CD4-positive, alpha-beta T cell (primary cell): ENCODE measurements at regions of chr6 and their contacts with region 1.

Region 1: GRCh38 chr6:30877419-30878371 is 6.6 kb upstream of the DDR1 start:
- DNase-seq: peak; percentile 55 to 86 (median 71)
- ATAC-seq: peak; percentile 74
- H3K4me3 ChIP-seq: peak overlapping the region; percentile 48
- H3K4me3 Mint-ChIP-seq: peak overlapping the region; percentile 34
- H3K27ac ChIP-seq: no peak overlapping the region
- H3K27ac Mint-ChIP-seq: peak overlapping the region; percentile 1
- H3K4me1 ChIP-seq: peaks cover 13% of the 10 kb centered on the region
- H3K4me1 Mint-ChIP-seq: peaks cover 19% of the 10 kb centered on the region
- H3K27me3 ChIP-seq: no peaks in the 10 kb centered on the region
- H3K27me3 Mint-ChIP-seq: no peaks in the 10 kb centered on the region
- CTCF ChIP-seq: peak; percentile 91

Region 2: GRCh38 chr6:30742316-30743098 is 135.2 kb before region 1 on chr6 and contains the start of gene FLOT1:
- CTCF ChIA-PET with region 1: interaction called, 3 read pairs
- POLR2A ChIA-PET with region 1: no interaction called
- intact Hi-C with region 1: loop called (anchors 1 to 2 kb)
- DNase-seq: peak; percentile 52 to 93 (median 76)
- ATAC-seq: peak; percentile 53
- H3K4me3 ChIP-seq: peak within 1 kb of the TSS; percentile 85
- H3K4me3 Mint-ChIP-seq: peak within 1 kb of the TSS; percentile 97
- H3K27ac ChIP-seq: peak within 1 kb of the TSS; percentile 31 to 76
- H3K27ac Mint-ChIP-seq: peak within 1 kb of the TSS; percentile 91
- H3K4me1 ChIP-seq: peaks cover 66% of the 10 kb centered on the region
- H3K4me1 Mint-ChIP-seq: peaks cover 61% of the 10 kb centered on the region
- H3K27me3 ChIP-seq: no peaks in the 10 kb centered on the region
- H3K27me3 Mint-ChIP-seq: no peaks in the 10 kb centered on the region
- CTCF ChIP-seq: no peak
- total RNA-seq, gene FLOT1: 31.6 TPM

Region 3: GRCh38 chr6:30821862-30822782 is 55.6 kb before region 1 on chr6:
- CTCF ChIA-PET with region 1: interaction called, 5 read pairs
- POLR2A ChIA-PET with region 1: no interaction called
- intact Hi-C with region 1: loop called in 1 of 2 experiments (anchors 1 kb)
- DNase-seq: peak in 4 of 14 experiments; percentile 23 to 69 (median 58)
- ATAC-seq: peak; percentile 55
- H3K4me3 ChIP-seq: no peak overlapping the region
- H3K4me3 Mint-ChIP-seq: no peak overlapping the region
- H3K27ac ChIP-seq: peak overlapping the region; percentile 25 to 29
- H3K27ac Mint-ChIP-seq: peak overlapping the region; percentile 70
- H3K4me1 ChIP-seq: peaks cover 45% of the 10 kb centered on the region
- H3K4me1 Mint-ChIP-seq: peaks cover 62% of the 10 kb centered on the region
- H3K27me3 ChIP-seq: no peaks in the 10 kb centered on the region
- H3K27me3 Mint-ChIP-seq: no peaks in the 10 kb centered on the region
- CTCF ChIP-seq: peak; percentile 64